Caco-2 (cell line): ENCODE measurements at regions of chr3 and their contacts with region 1.

Region 1: GRCh38 chr3:110583373-110583935 is 488.2 kb upstream of the NECTIN3 start:
- DNase-seq: peak; percentile 49 to 68
- H3K4me3 ChIP-seq: no peak overlapping the region
- H3K4me3 Mint-ChIP-seq: peak overlapping the region; percentile 29
- H3K27ac Mint-ChIP-seq: peak overlapping the region; percentile 56
- H3K4me1 ChIP-seq: peaks cover 29% of the 10 kb centered on the region
- H3K4me1 Mint-ChIP-seq: peaks cover 22% of the 10 kb centered on the region
- H3K27me3 ChIP-seq: no peaks in the 10 kb centered on the region
- H3K27me3 Mint-ChIP-seq: no peaks in the 10 kb centered on the region
- CTCF ChIP-seq: no peak

Region 2: GRCh38 chr3:110344897-110345767 is 238.3 kb before region 1 on chr3:
- CTCF ChIA-PET with region 1: no interaction called
- POLR2A ChIA-PET with region 1: no interaction called
- intact Hi-C with region 1: loop called (anchors 1 kb)
- DNase-seq: peak; percentile 56 to 83
- H3K4me3 ChIP-seq: peak overlapping the region; percentile 15
- H3K4me3 Mint-ChIP-seq: peak overlapping the region; percentile 59
- H3K27ac Mint-ChIP-seq: peak overlapping the region; percentile 92
- H3K4me1 ChIP-seq: peaks cover 31% of the 10 kb centered on the region
- H3K4me1 Mint-ChIP-seq: peaks cover 27% of the 10 kb centered on the region
- H3K27me3 ChIP-seq: no peaks in the 10 kb centered on the region
- H3K27me3 Mint-ChIP-seq: no peaks in the 10 kb centered on the region
- CTCF ChIP-seq: no peak

Region 3: GRCh38 chr3:110625201-110625747 is 41.8 kb after region 1 on chr3:
- CTCF ChIA-PET with region 1: no interaction called
- POLR2A ChIA-PET with region 1: no interaction called
- intact Hi-C with region 1: loop called (anchors 1 kb)
- DNase-seq: peak; percentile 82 to 89
- H3K4me3 ChIP-seq: no peak overlapping the region
- H3K4me3 Mint-ChIP-seq: peak overlapping the region; percentile 63
- H3K27ac Mint-ChIP-seq: peak overlapping the region; percentile 92
- H3K4me1 ChIP-seq: peaks cover 66% of the 10 kb centered on the region
- H3K4me1 Mint-ChIP-seq: peaks cover 46% of the 10 kb centered on the region
- H3K27me3 ChIP-seq: no peaks in the 10 kb centered on the region
- H3K27me3 Mint-ChIP-seq: no peaks in the 10 kb centered on the region
- CTCF ChIP-seq: no peak

Region 4: DNA sequence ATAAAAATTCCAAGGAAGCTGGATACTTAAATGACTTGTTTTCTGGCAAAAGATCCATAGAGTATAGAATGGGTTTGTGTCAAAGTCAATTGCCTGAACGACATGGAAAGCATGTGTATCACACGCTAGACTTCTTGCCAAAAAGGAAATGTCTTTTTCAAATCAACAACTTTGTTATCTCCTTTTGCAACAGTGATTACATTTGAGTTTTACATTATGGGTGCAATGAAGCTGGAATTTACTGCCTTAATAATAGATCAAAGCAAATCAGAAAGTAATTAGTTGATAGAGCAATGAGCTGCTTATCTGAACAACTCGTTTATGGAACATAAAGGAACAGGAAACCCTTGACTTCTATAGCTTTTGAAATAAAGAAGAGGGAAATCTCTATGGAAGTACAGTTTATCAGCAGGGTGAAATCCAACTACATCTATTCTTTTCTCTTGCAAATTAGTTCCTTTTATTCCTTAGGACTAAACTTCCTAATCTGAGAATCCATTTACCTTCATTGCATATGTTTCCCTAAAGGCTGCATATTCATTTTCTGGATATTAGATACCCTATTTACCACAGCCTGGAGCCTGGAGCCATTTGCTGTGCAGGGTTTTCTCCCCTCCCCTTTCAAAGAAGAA is 73.1 kb after region 1 on chr3:
- CTCF ChIA-PET with region 1: no interaction called
- POLR2A ChIA-PET with region 1: no interaction called
- intact Hi-C with region 1: loop called (anchors 2 kb)
- DNase-seq: no peak
- H3K4me3 ChIP-seq: no peak overlapping the region
- H3K4me3 Mint-ChIP-seq: no peak overlapping the region
- H3K27ac Mint-ChIP-seq: no peak overlapping the region
- H3K4me1 ChIP-seq: peaks cover 38% of the 10 kb centered on the region
- H3K4me1 Mint-ChIP-seq: peaks cover 20% of the 10 kb centered on the region
- H3K27me3 ChIP-seq: no peaks in the 10 kb centered on the region
- H3K27me3 Mint-ChIP-seq: no peaks in the 10 kb centered on the region
- CTCF ChIP-seq: no peak

Region 5: DNA sequence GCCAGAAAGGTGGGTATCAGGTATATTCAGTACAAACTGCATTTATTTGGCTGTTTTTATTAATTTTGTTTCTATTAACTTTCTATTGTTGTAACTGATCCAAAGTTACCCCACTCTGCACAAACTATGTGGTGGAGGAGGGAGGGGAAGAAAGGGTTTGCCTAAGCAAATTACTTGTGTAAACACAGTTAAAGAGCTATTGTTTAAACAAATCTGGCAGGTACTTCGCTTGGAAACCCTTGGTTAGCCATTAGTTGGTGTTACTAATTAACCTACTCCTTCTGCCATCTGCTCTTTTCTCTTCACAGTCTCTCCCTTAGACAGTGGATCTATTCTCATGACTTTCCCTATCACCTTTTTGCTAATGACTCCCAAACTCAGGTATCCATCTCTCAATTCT is 159.7 kb after region 1 on chr3:
- CTCF ChIA-PET with region 1: no interaction called
- POLR2A ChIA-PET with region 1: no interaction called
- intact Hi-C with region 1: loop called (anchors 2 kb)
- DNase-seq: peak; percentile 39 to 60
- H3K4me3 ChIP-seq: no peak overlapping the region
- H3K4me3 Mint-ChIP-seq: peak overlapping the region; percentile 24
- H3K27ac Mint-ChIP-seq: no peak overlapping the region
- H3K4me1 ChIP-seq: peaks cover 27% of the 10 kb centered on the region
- H3K4me1 Mint-ChIP-seq: peaks cover 13% of the 10 kb centered on the region
- H3K27me3 ChIP-seq: no peaks in the 10 kb centered on the region
- H3K27me3 Mint-ChIP-seq: no peaks in the 10 kb centered on the region
- CTCF ChIP-seq: no peak

Region 6: DNA sequence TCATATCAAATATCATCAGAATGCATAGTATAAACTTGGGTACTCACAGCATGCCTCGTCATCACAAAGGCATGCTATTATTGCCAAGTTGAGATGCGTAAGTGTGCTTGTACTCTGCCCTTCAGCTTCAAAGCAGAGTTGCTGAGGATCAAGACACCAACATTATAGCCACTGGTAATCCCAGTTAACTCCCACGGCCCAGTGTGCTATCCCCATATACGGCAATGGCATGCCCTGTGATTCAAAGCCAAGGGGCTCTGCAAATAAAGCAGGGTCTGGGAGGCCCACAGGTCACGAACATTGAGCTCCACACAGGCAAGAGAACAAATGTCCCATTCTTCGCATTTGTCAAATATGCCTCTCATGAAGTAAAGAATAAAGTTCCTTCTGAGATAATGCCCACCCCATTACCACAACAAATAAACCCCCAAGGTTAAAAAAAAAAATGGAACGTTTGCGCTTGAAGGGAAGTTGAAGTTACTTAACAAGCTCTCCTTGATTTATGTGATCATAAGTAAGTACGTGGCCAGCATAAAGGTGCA is 190.0 kb after region 1 on chr3:
- CTCF ChIA-PET with region 1: no interaction called
- POLR2A ChIA-PET with region 1: no interaction called
- intact Hi-C with region 1: loop called (anchors 1 kb)
- DNase-seq: peak; percentile 81 to 94
- H3K4me3 ChIP-seq: no peak overlapping the region
- H3K4me3 Mint-ChIP-seq: no peak overlapping the region
- H3K27ac Mint-ChIP-seq: peak overlapping the region; percentile 65
- H3K4me1 ChIP-seq: peaks cover 36% of the 10 kb centered on the region
- H3K4me1 Mint-ChIP-seq: peaks cover 28% of the 10 kb centered on the region
- H3K27me3 ChIP-seq: no peaks in the 10 kb centered on the region
- H3K27me3 Mint-ChIP-seq: no peaks in the 10 kb centered on the region
- CTCF ChIP-seq: no peak

Region 7: GRCh38 chr3:110995461-110996231 is 412.2 kb after region 1 on chr3:
- CTCF ChIA-PET with region 1: no interaction called
- POLR2A ChIA-PET with region 1: no interaction called
- intact Hi-C with region 1: loop called (anchors 2 kb)
- DNase-seq: peak; percentile 22 to 47
- H3K4me3 ChIP-seq: no peak overlapping the region
- H3K4me3 Mint-ChIP-seq: no peak overlapping the region
- H3K27ac Mint-ChIP-seq: no peak overlapping the region
- H3K4me1 ChIP-seq: peaks cover 13% of the 10 kb centered on the region; the same call in 1 of the 2 replicates
- H3K4me1 Mint-ChIP-seq: no peaks in the 10 kb centered on the region
- H3K27me3 ChIP-seq: no peaks in the 10 kb centered on the region
- H3K27me3 Mint-ChIP-seq: no peaks in the 10 kb centered on the region
- CTCF ChIP-seq: no peak